Activated CD4-positive, alpha-beta memory T cell treated with anti-CD3 and anti-CD28 coated beads, Interleukin-2, amount 10 ng/mL, durations not matched to agents 7 days and 5 days (primary cell): ENCODE measurements at regions of chr1 and their contacts with region 1.

Region 1: GRCh38 chr1:153946622-153947241 is at the start of gene DENND4B:
- DNase-seq: peak; percentile 77
- H3K4me3 Mint-ChIP-seq: peak within 1 kb of the TSS; percentile 92
- H3K27ac Mint-ChIP-seq: peak within 1 kb of the TSS; percentile 99
- H3K4me1 Mint-ChIP-seq: peaks cover 35% of the 10 kb centered on the region
- H3K27me3 Mint-ChIP-seq: no peaks in the 10 kb centered on the region
- total RNA-seq, gene DENND4B: 159 to 166 TPM

Region 2: GRCh38 chr1:153608742-153609584 is 337.8 kb before region 1 on chr1:
- CTCF ChIA-PET with region 1: no interaction called
- POLR2A ChIA-PET with region 1: no interaction called
- DNase-seq: no peak
- H3K4me3 Mint-ChIP-seq: no peak overlapping the region
- H3K27ac Mint-ChIP-seq: no peak overlapping the region
- H3K4me1 Mint-ChIP-seq: no peaks in the 10 kb centered on the region
- H3K27me3 Mint-ChIP-seq: peaks cover 3% of the 10 kb centered on the region

Region 3: GRCh38 chr1:153805042-153805745 is 141.5 kb before region 1 on chr1:
- CTCF ChIA-PET with region 1: interaction called, 3 read pairs
- POLR2A ChIA-PET with region 1: interaction called, 16 read pairs
- DNase-seq: peak; percentile 71
- H3K4me3 Mint-ChIP-seq: no peak overlapping the region
- H3K27ac Mint-ChIP-seq: peak overlapping the region; percentile 60
- H3K4me1 Mint-ChIP-seq: peaks cover 30% of the 10 kb centered on the region
- H3K27me3 Mint-ChIP-seq: no peaks in the 10 kb centered on the region

Region 4: DNA sequence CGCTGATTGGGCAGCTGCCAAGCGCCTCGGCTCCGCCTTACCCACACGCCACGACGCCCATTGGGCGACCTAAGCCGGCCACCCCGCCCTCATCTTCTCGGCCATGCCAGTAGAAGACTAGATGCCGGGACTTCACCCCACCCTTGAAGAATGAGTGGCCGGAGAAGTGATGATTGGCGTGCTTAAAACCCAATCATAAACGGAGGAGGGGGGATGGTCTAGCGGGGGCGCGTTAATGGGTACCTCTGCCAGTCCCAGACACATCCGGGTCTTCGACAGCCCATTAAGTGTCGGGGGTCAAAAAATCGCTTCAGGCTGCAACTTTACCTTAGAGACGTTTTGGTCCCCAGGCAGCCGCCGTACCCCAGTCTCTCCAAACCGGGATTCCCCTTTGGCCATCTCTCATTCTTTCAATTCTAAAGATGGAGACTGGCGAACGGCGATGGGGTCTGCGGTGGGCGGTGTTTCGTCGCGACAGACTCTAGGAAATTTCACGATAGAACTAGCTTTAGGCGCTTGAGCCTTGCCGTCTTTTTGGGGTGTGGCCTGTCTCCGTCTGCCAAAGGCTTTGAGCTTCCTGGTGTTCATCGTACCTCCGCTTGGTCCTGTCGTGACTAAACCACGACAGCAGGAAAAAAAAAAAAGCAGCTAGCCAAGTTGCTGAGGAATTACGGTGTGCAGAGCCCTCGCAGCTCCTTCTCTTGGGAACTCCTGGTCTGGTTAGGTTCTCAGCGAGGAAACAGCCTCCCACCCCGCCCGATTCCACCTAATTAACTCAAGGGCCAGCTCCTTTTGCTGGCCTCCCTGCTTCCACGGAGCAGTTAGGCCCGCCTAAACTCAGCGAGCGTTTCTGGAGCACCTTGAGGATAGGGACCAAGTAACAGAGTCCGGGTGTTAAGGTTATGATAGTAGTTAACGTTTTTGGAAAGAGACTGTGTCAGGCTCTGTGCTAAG is 23.5 kb before region 1 on chr1 and contains the start of gene GATAD2B:
- CTCF ChIA-PET with region 1: interaction called, 52 read pairs
- POLR2A ChIA-PET with region 1: interaction called, 165 read pairs
- DNase-seq: peak; percentile 99
- H3K4me3 Mint-ChIP-seq: peak within 1 kb of the TSS; percentile 92
- H3K27ac Mint-ChIP-seq: peak within 1 kb of the TSS; percentile 88
- H3K4me1 Mint-ChIP-seq: peaks cover 42% of the 10 kb centered on the region
- H3K27me3 Mint-ChIP-seq: no peaks in the 10 kb centered on the region
- total RNA-seq, gene GATAD2B: 70.8 to 71.1 TPM

Region 5: GRCh38 chr1:153958111-153958960 is 11.6 kb after region 1 on chr1 and contains the start of gene CRTC2:
- CTCF ChIA-PET with region 1: interaction called, 51 read pairs
- POLR2A ChIA-PET with region 1: interaction called, 112 read pairs
- DNase-seq: peak; percentile 99
- H3K4me3 Mint-ChIP-seq: peak within 1 kb of the TSS; percentile 96
- H3K27ac Mint-ChIP-seq: peak within 1 kb of the TSS; percentile 95
- H3K4me1 Mint-ChIP-seq: peaks cover 60% of the 10 kb centered on the region
- H3K27me3 Mint-ChIP-seq: no peaks in the 10 kb centered on the region
- total RNA-seq, gene CRTC2: 107 TPM

Region 6: DNA sequence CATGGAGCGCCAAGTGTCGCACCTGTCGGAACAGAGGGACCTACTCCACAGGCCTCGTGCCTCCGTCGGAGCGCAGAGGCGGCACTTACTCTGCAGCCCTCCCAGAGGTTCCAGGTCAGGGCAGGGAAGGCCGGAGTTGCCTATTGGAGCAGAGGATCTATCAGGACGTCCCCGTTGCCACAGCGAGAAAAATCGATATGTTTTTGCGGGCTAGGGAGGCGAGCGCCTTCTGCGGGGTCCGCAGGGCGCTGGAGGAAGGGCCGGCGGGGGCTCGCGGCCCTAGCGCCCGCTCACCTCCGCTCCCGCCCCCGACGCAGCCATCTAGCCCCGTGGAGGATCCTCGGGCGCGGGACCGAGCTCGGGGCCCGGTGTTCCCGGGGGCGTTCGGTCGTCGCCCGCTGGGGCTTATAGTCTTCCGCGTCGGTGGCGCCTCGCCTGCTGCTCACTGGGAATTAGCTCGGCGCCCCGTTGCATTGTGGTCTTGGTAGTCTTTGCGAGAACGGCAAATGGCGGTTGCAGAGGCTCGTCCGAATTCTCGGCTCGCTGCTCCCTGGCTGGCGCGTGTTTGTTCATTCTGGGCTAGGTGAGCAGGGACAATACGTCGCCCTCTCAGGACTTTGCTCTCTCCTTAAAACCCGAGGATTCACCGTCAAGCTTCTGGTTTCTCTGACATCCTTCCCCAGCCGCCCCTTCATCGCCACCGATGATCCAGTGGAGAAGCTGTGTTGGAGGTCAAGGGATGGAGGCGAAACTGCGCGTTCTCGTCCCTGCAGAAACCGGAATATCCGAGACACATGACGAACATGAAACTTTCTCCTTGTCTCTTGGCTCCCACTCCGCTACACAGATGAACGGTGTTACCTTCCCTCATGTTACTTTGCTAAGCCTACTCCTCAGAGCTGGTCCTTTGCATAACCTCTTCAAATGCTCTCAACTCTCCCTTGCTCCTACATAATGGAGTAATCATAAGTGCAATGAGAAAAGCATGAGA is 30.8 kb after region 1 on chr1 and contains the start of gene JTB:
- CTCF ChIA-PET with region 1: interaction called, 16 read pairs
- POLR2A ChIA-PET with region 1: interaction called, 82 read pairs
- DNase-seq: peak; percentile 89
- H3K4me3 Mint-ChIP-seq: peak within 1 kb of the TSS; percentile 97
- H3K27ac Mint-ChIP-seq: peak within 1 kb of the TSS; percentile 89
- H3K4me1 Mint-ChIP-seq: peaks cover 49% of the 10 kb centered on the region
- H3K27me3 Mint-ChIP-seq: no peaks in the 10 kb centered on the region
- total RNA-seq, gene JTB: 120 to 127 TPM

Region 7: GRCh38 chr1:154129391-154129970 is 182.7 kb after region 1 on chr1:
- CTCF ChIA-PET with region 1: no interaction called
- POLR2A ChIA-PET with region 1: no interaction called
- DNase-seq: no peak
- H3K4me3 Mint-ChIP-seq: no peak overlapping the region
- H3K27ac Mint-ChIP-seq: no peak overlapping the region
- H3K4me1 Mint-ChIP-seq: peaks cover 9% of the 10 kb centered on the region
- H3K27me3 Mint-ChIP-seq: no peaks in the 10 kb centered on the region